PC-9 (cell line): ENCODE measurements at regions of chr17 and their contacts with region 1.

Region 1: DNA sequence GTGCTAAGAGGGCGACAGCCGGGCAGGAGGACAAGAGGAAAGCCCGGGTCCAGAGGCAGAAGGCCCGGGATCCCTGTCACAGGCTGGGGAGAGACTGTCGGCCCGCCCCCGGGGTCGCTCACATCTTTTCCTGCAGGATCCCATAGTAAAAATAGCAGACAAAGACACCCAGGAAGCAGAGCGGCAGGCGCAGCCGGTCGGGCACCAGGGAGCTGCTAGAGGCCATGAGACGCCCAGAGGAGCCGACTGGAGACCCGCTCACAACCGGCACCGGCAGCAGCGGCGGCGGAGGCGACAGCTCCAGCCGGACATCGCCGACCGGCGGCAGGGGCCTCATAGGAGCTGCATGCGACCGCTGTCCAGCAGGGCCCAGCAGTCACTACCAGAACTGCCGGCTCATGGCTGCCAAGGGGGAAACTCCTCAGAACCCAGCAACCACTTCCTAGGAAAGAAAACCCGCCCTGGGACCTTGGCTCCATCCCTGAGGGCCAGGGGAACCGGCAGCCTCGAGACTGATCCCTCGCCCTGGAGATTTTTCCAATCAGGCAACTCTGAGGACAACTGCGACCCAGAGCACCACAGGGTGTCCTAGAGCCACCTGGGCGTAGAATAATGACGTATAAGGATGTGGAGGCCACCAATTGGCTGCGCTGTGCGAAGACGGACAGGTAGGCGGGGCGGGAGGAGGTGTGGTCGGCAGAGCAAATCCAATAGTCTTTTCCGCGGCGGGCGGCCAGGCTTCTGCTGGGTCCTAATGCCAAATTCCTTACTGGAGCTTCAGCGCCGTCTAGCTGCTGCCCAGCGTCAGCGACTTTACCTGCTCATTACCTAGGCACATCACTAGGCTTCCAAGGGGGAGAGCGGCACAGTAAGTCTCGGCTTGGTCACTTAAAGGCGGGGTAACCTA is at the start of gene SLC35B1:
- DNase-seq: peak; percentile 97 to 98
- H3K4me3 ChIP-seq: peak within 1 kb of the TSS; percentile 92
- H3K27ac ChIP-seq: peak within 1 kb of the TSS; percentile 86
- H3K4me1 ChIP-seq: peaks cover 17% of the 10 kb centered on the region
- H3K27me3 ChIP-seq: no peaks in the 10 kb centered on the region
- CTCF ChIP-seq: peak; percentile 83
- total RNA-seq, gene SLC35B1: 43.5 and 44.7 TPM in 2 replicates

Region 2: DNA sequence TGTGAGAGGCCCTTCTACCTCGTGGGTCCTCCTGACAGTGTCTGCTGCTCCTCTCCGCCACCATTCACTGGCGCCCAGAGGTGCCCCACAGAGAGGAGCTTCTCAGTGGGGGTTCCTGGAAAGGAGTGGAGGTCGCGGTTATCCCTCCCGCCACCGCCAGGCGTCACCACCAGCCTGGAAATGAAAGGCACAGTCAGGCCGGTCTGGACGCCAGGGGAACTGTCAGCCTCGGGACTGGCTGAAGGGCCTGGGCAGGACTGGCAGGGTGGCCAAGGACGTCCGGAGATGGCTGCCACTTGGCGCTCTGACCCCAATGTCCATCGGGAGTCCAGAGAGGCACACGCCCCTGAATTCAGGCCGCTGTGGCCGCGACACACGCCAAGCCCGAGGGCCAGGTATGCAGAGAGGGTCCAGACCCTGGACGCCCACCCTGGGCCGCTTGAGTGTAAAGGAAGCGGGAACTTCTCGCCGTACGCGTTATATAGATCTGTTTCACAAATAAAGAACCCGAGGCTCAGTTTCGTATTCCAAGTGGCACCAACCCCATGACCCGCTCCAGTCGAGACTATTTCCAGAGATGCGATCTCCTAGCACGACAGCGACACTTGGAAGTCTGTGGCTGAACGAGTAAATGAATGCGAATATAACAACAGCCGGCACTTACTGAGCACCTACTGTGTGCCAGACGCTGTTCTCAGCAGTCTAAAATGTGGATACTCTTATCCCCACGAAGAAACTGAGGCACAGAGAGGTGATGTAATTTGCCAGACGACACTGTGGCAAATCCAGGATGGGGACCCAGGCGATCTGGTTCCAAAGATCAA is 139.8 kb before region 1 on chr17:
- CTCF ChIA-PET with region 1: interaction called, 16 read pairs
- POLR2A ChIA-PET with region 1: no interaction called
- intact Hi-C with region 1: no loop called
- DNase-seq: peak; percentile 69 to 88
- H3K4me3 ChIP-seq: peak overlapping the region; percentile 38; the same call in 1 of the 2 replicates
- H3K27ac ChIP-seq: no peak overlapping the region
- H3K4me1 ChIP-seq: 0 out of 2 replicates have a peak, but pooled peaks cover 6% of the 10 kb centered on the region
- H3K27me3 ChIP-seq: peaks cover 28% of the 10 kb centered on the region
- CTCF ChIP-seq: peak; percentile 99

Region 3: GRCh38 chr17:49723423-49723822 is 15.6 kb after region 1 on chr17:
- CTCF ChIA-PET with region 1: interaction called, 17 read pairs
- POLR2A ChIA-PET with region 1: no interaction called
- intact Hi-C with region 1: no loop called
- DNase-seq: no peak
- H3K4me3 ChIP-seq: no peak overlapping the region
- H3K27ac ChIP-seq: no peak overlapping the region
- H3K4me1 ChIP-seq: no peaks in the 10 kb centered on the region
- H3K27me3 ChIP-seq: no peaks in the 10 kb centered on the region
- CTCF ChIP-seq: no peak

Region 4: DNA sequence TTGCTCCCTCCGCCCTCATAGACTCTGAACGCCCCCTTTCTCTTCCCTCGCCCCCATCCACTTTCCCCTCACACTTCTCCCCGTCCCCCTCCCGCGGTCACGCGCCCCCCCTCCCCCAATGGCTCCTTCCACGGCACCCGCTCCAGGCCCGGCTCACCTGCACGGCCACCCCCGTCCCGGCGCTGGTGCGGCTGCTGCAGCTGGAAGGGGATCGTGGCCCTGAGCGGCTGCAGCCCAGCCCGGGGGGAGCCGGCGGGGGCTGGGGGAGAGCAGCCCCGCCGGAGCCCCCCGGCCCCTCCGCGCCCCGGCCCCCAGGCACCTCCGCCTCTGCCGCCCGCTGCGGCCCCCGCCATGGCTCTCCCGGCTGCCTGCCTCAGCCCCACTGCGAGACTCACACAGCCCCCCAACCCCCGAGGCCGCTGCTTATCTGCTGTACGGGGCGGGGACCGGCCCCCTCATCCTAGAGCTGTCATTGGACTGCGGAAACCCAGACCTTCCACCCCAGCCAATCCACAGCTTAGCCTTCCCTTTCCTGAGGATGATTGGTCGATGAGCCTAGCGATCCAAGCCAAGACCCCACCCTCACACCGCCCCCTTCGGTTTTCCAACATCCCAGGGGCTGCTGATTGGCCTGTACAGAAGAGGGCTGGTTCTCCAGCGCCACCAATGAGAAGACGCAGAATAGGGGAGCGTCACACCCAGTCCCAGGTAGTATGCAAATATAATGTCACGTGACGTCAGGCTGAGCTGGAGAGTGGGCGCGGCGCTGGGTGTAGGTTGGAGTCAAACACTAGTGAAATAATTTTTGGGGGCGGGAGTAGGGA is 56.1 kb after region 1 on chr17 and contains the start of gene FAM117A:
- CTCF ChIA-PET with region 1: interaction called, 3 read pairs
- POLR2A ChIA-PET with region 1: interaction called, 11 read pairs
- intact Hi-C with region 1: loop called (anchors 2 kb)
- DNase-seq: peak; percentile 97 to 99
- H3K4me3 ChIP-seq: peak within 1 kb of the TSS; percentile 54
- H3K27ac ChIP-seq: no peak within 1 kb of the TSS
- H3K4me1 ChIP-seq: peaks cover 4% of the 10 kb centered on the region; the same call in 1 of the 2 replicates
- H3K27me3 ChIP-seq: no peaks in the 10 kb centered on the region
- CTCF ChIP-seq: no peak; the same call in 1 of the 2 replicates
- total RNA-seq, gene FAM117A: 12.7 and 15.0 TPM in 2 replicates

Region 5: GRCh38 chr17:49788478-49789242 is 80.8 kb after region 1 on chr17 and contains the start of gene KAT7:
- CTCF ChIA-PET with region 1: no interaction called
- POLR2A ChIA-PET with region 1: no interaction called
- intact Hi-C with region 1: loop called (anchors 1 kb)
- DNase-seq: peak; percentile 98 to 99
- H3K4me3 ChIP-seq: peak within 1 kb of the TSS; percentile 88
- H3K27ac ChIP-seq: peak within 1 kb of the TSS; percentile 91
- H3K4me1 ChIP-seq: peaks cover 24% of the 10 kb centered on the region
- H3K27me3 ChIP-seq: no peaks in the 10 kb centered on the region
- CTCF ChIP-seq: 0 out of 2 replicates have a peak, but pooled peaks have one; percentile 19
- total RNA-seq, gene KAT7: 41.6 and 57.0 TPM in 2 replicates

Region 6: DNA sequence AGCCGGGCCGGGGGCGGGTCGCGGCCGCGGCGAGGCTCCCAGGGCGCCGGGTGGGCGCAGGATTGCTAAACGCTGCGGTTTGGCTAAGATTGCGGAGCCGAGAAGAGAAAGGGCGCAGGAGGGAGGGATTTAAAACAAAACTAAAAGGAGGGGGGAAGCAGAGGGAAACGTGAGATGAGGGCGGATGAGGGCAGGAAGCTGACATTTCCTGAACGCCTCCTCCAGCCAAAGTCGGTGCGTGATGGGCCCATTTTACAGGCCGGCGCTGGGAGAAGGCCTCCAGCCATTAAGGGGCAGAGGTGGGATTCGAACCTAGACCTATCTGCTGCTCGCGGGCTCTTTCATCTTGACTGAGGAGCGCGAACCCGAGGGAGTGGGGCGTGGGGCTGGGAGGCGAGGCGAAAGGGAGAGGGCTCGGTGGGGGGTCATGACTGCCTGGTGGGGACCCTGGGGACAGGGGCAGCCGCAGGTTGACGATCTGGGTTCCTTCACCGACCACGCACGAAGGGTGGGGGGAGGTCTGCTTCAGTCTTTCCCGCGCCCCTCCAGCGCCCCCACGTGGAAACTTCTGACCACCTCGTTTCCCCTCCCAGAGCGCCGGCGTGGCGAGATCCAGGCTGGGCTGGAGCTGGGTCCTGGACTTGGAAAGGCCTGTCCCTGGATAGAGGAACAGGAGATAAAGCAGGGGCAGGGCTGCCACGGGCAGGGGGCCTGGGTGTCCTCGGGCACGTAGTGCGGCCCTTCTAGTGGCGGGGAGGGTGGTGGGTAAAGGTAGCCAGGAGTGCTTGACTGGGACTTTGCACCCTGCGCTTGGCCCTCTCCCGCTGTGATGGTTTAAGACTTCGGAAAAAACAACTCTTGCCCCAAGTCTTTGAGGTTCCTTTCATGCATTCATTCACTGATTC is 143.8 kb after region 1 on chr17:
- CTCF ChIA-PET with region 1: no interaction called
- POLR2A ChIA-PET with region 1: no interaction called
- intact Hi-C with region 1: loop called (anchors 5 kb)
- DNase-seq: peak in 1 of 2 experiments; percentile 66
- H3K4me3 ChIP-seq: peak overlapping the region; percentile 56; the same call in 1 of the 2 replicates
- H3K27ac ChIP-seq: no peak overlapping the region
- H3K4me1 ChIP-seq: peaks cover 5% of the 10 kb centered on the region
- H3K27me3 ChIP-seq: peaks cover 50% of the 10 kb centered on the region
- CTCF ChIP-seq: peak; percentile 74

Region 7: DNA sequence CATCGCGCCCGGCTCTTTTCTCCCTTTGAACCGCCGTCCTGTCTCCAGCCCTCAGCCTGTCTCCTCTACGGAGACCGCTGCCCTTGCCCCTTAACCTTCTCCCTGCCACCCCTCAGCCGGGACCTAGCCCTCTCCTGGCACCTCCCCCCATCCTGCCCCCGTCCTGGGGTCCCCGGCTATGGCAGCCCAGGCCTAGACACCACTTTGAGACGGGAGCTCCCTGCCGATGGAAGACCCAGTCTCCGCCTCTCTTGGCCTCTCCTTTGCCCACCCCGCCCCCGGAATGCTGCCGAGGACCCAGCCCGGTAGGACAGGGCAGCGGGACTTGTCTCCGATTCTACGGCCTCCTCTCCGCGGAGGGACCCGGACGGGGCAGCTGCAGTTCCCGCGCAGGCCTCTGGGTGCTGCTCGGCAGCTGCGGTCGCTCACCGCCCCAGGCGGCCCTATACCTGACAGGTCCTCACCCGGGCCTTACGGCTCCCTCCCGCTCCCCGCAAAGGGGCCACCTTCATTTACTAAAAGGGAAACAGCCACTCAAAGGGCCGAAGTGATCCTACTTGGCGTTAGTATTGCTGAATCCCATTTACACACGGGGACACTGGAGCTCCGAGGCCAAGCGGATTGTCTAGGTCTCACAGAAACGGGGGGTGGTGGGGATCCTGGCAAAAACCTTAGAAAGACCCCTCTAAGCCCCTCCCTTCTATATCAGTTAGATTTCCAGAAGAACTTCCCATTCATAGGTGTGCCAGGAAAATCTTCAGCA is 172.6 kb after region 1 on chr17:
- CTCF ChIA-PET with region 1: interaction called, 11 read pairs
- POLR2A ChIA-PET with region 1: no interaction called
- intact Hi-C with region 1: no loop called
- DNase-seq: peak; percentile 65 to 88
- H3K4me3 ChIP-seq: peak overlapping the region; percentile 23; the same call in 1 of the 2 replicates
- H3K27ac ChIP-seq: no peak overlapping the region
- H3K4me1 ChIP-seq: peaks cover 19% of the 10 kb centered on the region
- H3K27me3 ChIP-seq: no peaks in the 10 kb centered on the region
- CTCF ChIP-seq: peak; percentile 99